ENCODE measurements at regions of chr6 and their contacts with region 1.

Region 1: DNA sequence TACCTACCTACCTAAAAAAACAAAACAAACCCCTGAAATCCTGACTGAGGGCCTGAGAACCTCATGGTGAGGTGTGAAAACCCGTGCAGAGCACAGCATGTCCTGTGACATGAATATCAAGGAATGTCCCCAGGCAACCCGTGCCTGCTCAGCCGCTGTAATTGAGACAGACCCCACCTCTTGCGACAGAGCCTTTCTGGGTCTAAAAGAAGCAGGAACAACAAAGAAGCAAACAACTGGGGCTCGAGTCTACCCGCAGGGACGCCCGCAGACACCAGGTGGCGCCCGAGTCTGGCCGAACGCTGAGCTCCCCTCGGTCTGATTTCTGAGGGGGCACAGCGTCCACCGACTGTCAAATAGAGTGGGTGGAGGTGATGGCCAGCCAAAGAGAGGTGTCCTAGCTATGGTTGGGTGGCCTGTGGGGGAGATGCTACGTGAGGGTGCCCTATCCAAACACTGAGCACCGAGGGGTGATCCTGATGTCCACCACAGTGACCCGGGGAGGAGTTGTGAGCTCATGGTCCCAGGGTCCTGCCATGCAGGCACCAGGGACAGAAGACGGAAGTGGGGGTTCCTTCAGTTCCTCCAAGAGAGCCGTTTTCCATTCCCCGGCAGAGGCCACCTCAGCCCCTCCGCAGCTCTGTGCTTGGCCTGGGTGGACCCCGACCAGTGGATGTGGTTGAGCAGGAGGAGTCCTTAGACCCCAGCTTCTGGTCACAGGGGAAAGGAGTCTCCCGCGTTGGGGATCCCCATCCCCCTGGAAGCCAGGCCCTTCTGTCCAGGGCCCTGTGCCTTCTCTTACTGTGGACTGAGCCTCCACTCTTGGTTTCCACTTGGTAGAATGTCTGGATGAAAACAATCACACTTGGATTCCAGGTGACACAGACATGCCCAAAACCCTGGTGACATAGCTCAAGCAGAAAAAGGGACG is 268.2 kb downstream of the CDC5L start:
- DNase-seq: peak; percentile 83 to 91
- ATAC-seq: peak; percentile 90 to 92
- H3K4me3 ChIP-seq: no peak overlapping the region
- H3K27ac ChIP-seq: peak overlapping the region in 1 of 4 donors; percentile 39
- H3K4me1 ChIP-seq: peaks cover 9 to 14% of the 10 kb centered on the region in 2 donors
- H3K27me3 ChIP-seq: no peaks in the 10 kb centered on the region
- CTCF ChIP-seq: peak; percentile 82 to 95 (median 92)
- POLR2A ChIP-seq: no peak

Region 2: DNA sequence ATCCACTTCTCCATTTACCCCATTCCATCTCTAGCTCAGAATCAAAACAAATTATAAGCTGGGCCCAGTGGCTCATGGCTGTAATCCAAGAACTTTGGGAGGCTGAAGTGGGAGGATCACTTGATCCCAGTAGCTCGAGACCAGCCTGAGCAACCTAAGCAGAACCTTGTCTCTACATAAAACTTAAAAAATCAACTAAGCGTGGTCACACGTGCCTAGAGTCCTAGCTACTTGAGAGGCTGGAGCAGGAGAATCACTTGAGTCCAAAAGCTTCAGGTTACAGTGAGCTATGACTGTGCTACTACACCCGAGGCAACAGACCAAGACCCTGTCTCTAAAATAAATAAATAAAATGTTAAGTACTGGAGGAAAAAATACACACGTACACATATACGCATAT is 597.8 kb after region 1 on chr6:
- in situ Hi-C with region 1: no loop called
- intact Hi-C with region 1: no loop called
- DNase-seq: no peak
- ATAC-seq: no peak
- H3K4me3 ChIP-seq: no peak overlapping the region
- H3K27ac ChIP-seq: no peak overlapping the region
- H3K4me1 ChIP-seq: peaks cover 0 to 8% of the 10 kb centered on the region in 2 donors
- H3K27me3 ChIP-seq: no peaks in the 10 kb centered on the region
- CTCF ChIP-seq: no peak
- POLR2A ChIP-seq: no peak

Region 3: GRCh38 chr6:45377554-45378333 is 722.1 kb after region 1 on chr6 and contains the start of gene SUPT3H:
- in situ Hi-C with region 1: no loop called
- intact Hi-C with region 1: loop called (anchors 2 kb)
- DNase-seq: peak; percentile 74 to 86
- ATAC-seq: peak; percentile 85 to 90
- H3K4me3 ChIP-seq: peak within 1 kb of the TSS; percentile 93 to 95 (median 94)
- H3K27ac ChIP-seq: peak within 1 kb of the TSS; percentile 97 to 99 (median 98)
- H3K4me1 ChIP-seq: peaks cover 12 to 16% of the 10 kb centered on the region in 2 donors
- H3K27me3 ChIP-seq: no peaks in the 10 kb centered on the region
- CTCF ChIP-seq: peak in 3 of 5 experiments; percentile 17 to 36 (median 30)
- POLR2A ChIP-seq: peak; percentile 76 to 79
- total RNA-seq, gene SUPT3H: 1.5 to 9.0 (median 4.2) TPM

Region 4: GRCh38 chr6:45714741-45715507 is 1059.2 kb after region 1 on chr6:
- in situ Hi-C with region 1: loop called (anchors 5 to 25 kb)
- intact Hi-C with region 1: loop called (anchors 1 kb)
- DNase-seq: peak; percentile 16 to 43
- ATAC-seq: peak; percentile 95 to 96
- H3K4me3 ChIP-seq: no peak overlapping the region
- H3K27ac ChIP-seq: no peak overlapping the region
- H3K4me1 ChIP-seq: peaks cover 0 to 7% of the 10 kb centered on the region in 2 donors
- H3K27me3 ChIP-seq: no peaks in the 10 kb centered on the region
- CTCF ChIP-seq: peak; percentile 60 to 84 (median 70)
- POLR2A ChIP-seq: no peak

Region 5: DNA sequence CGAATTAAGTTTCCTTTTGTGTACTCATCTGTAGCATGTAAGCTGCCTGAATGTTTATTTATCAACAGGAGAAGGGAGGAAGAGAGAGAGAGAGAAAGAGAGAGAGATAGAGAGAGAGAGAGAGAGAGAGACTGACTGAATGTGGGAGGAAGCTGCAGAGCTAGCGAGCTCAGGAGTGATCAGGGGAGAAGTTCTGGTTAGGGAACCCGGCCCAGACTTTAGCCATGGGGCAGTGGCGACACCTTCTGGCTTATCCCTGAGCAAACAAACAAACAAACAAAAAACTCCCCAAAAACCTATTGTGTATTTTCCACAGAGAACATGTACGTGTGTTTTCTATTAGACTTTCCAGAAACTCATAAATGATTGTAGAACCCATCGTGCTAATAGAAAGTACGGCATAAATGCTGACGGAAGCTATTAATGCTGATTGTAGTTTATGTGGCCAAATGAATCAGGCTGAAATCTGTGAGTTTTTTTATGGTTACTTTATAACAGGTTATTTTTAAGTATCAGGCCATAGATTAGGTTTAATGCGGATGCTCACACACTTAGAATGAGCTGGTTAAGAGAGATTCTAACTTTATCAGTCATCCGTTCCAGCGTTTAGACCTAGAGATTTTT is 1267.2 kb after region 1 on chr6:
- in situ Hi-C with region 1: loop called in 2 of 4 experiments (anchors 10 to 25 kb)
- intact Hi-C with region 1: loop called (anchors 5 kb)
- DNase-seq: peak; percentile 52 to 58
- ATAC-seq: peak; percentile 62 to 74
- H3K4me3 ChIP-seq: no peak overlapping the region
- H3K27ac ChIP-seq: peak overlapping the region in 2 of 4 donors; percentile 7 to 29
- H3K4me1 ChIP-seq: peaks cover 12 to 24% of the 10 kb centered on the region in 2 donors
- H3K27me3 ChIP-seq: no peaks in the 10 kb centered on the region
- CTCF ChIP-seq: peak; percentile 49 to 66 (median 57)
- POLR2A ChIP-seq: no peak